H1 (cell line): ENCODE measurements at regions of chr14 and their contacts with region 1.

Region 1: DNA sequence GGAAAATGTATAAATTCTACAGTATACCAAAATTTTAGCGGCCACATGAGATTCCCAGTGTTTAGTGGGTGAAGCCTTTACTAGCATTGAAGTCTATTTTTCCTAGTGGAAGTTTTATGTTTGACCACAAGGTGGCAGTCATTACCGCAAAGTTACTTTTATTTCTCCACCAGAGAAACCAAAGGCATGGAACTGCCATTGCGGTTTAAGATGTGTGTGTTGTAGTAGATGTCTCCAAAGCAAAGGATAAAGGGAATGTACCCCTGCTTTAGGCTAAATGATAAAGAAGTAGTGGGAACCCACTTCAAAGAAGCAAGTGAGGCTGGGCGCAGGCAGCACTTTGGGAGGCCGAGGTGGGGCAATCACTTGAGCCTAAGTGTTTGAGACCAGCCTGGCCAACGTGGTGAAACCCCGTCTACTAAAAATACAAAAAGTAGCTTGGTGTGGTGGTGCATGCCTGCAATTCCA is 140.5 kb downstream of the PRKCH start:
- DNase-seq: peak in 1 of 2 experiments; percentile 43
- H3K4me3 ChIP-seq: no peak overlapping the region
- H3K27ac ChIP-seq: no peak overlapping the region
- H3K4me1 ChIP-seq: peaks cover under 1 to 13% (median 8%) of the 10 kb centered on the region in 4 experiments
- H3K27me3 ChIP-seq: no peaks in the 10 kb centered on the region
- CTCF ChIP-seq: peak in 2 of 3 experiments; percentile 64 to 69; a peak in 3 of 4 replicates
- EP300 ChIP-seq: no peak
- POLR2A ChIP-seq: no peak
- RAD21 ChIP-seq: peak; percentile 88 to 92

Region 2: GRCh38 chr14:61730756-61731373 is 269.0 kb after region 1 on chr14:
- CTCF ChIA-PET with region 1: interaction called, 17 read pairs
- POLR2A ChIA-PET with region 1: interaction called, 3 read pairs
- DNase-seq: no peak
- H3K4me3 ChIP-seq: no peak overlapping the region
- H3K27ac ChIP-seq: no peak overlapping the region
- H3K4me1 ChIP-seq: no peaks in the 10 kb centered on the region
- H3K27me3 ChIP-seq: peaks cover 0 to 2% (median 0%) of the 10 kb centered on the region in 4 experiments; a peak in 1 of 7 replicates
- CTCF ChIP-seq: no peak; a peak in 1 of 4 replicates
- EP300 ChIP-seq: no peak
- POLR2A ChIP-seq: no peak
- RAD21 ChIP-seq: peak in 1 of 2 experiments; percentile 37; a peak in 3 of 4 replicates